Transverse colon (tissue), 4 donors: ENCODE measurements at regions of chr5 and their contacts with region 1.

Region 1: DNA sequence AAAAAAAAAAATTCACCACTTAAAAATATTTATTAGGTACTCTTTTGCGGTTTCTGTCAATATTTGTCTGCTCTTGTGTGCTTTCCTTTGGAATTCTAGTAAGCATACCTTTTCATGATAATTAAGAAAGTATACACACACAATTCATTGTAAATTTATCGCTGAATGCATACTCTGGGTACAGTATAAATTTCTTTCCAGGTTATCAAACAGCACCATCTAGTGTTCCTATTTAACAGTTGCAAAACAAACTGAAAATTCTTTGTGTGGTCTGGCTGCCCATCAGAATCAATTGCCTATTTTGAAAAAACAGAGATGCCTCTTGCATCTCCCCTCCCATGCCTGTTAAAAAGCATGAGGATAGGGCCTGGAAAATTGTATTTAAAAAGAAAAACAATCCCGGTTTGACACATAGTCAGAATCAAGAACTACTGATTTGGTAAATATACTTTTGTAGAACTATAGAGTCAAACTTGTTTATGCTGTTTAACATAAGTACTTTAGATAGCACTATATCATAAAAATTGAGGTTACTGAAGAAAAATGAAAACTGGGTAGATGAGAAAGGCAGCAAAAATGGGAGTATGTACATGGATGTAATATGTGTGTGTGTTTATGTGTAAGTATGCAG is 16.2 kb downstream of the PGGT1B start:
- DNase-seq: no peak
- H3K4me3 ChIP-seq: no peak overlapping the region
- H3K27ac ChIP-seq: no peak overlapping the region
- H3K4me1 ChIP-seq: peaks cover 0 to 26% (median 8%) of the 10 kb centered on the region in 4 donors
- H3K27me3 ChIP-seq: no peaks in the 10 kb centered on the region
- CTCF ChIP-seq: peak; percentile 68 to 75 (median 71)
- EP300 ChIP-seq: no peak
- POLR2A ChIP-seq: no peak

Region 2: DNA sequence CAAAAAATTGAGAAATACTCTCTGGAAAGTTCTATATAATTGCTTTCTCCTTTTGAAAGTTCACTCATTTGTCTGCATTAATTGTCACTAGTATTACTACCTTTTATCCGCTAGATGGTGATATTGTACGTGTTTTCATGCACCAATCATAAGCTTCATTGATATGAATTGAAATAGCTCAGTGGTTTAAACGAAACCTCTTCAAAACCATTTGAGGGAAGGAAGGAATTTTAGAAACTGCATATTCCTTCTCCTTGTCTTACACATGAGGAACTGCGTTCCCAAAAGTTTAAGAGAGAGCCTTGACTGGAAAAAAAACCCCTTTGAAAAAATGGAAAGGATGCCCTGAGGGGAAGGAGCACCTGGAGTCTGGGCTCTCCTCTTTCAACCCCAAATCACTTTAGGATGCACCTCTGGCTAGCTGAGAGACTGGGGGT is 1634.4 kb before region 1 on chr5:
- in situ Hi-C with region 1: no loop called
- intact Hi-C with region 1: loop called (anchors 10 kb)
- DNase-seq: no peak
- H3K4me3 ChIP-seq: no peak overlapping the region
- H3K27ac ChIP-seq: no peak overlapping the region
- H3K4me1 ChIP-seq: peaks cover 0 to 3% (median 0%) of the 10 kb centered on the region in 4 donors
- H3K27me3 ChIP-seq: peaks cover 13% of the 10 kb centered on the region
- CTCF ChIP-seq: peak; percentile 52 to 62 (median 58)
- EP300 ChIP-seq: no peak
- POLR2A ChIP-seq: no peak

Region 3: DNA sequence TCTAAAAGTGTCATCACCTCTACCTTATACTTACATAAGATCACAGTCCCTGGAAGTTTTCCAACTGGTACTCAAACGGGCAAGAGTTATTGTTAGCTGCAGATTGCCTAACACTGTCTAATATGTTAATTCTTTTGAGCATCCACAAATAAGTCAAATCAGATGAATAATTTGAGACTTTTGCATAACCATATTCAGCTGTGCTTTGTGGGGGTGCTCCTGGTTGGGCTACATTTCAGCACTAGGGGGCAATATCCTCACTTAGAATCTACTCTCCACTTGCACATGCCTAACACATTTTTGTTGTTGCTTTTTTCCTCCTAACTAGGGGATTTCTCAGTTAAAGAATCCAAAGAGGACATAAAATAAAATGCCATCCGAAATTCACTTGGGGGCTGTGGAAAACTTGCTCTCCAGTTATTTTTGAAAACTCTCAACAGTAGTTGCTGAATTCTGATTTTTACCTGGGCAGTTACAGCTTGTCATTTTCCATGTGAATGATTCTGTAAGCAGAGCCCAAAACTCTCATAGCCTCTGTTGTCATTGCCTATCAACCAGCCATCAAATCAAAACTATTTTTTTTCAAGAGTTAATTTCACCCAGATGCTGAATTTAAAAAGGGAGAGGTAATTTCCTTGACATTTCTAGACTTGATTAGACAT is 148.3 kb before region 1 on chr5:
- in situ Hi-C with region 1: loop called (anchors 5 to 25 kb)
- intact Hi-C with region 1: no loop called
- DNase-seq: peak; percentile 23
- H3K4me3 ChIP-seq: no peak overlapping the region
- H3K27ac ChIP-seq: no peak overlapping the region
- H3K4me1 ChIP-seq: peaks cover 0 to 7% (median 0%) of the 10 kb centered on the region in 4 donors
- H3K27me3 ChIP-seq: no peaks in the 10 kb centered on the region
- CTCF ChIP-seq: peak; percentile 58 to 69 (median 65)
- EP300 ChIP-seq: no peak
- POLR2A ChIP-seq: no peak

Region 4: DNA sequence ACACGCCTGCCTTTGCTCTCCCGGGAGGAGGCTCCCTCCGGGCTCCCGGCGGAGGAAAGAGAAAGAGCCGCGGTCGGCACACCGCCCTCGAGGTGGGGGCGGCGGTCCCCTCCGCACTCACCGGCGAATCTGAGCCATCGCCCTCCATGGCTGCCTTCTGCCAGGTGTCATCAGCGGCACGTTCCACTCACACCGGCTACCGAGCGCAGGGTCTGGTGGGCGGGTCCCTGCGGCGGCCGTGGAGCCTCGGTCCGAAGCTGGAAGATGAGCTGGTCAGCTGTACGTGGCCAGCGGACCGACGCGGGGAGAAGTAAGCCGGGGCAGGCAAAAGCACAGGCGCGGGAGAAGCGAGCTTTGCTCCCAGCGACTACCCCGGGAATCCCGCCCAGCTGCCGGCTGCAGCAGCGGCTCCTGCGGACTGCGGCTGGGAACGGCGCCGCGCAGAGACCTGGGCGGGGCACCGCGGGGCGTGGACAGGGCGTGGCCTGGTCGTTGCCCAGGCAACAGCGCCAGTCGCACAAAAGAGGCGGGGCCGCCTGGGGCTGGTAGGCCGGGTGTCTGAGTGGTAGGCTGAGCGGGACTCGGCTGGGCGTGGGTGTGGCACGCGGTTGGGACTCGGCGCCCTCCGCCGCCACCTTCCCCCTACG is 76.9 kb before region 1 on chr5 and contains the start of gene TRIM36:
- in situ Hi-C with region 1: no loop called
- intact Hi-C with region 1: loop called (anchors 10 kb)
- DNase-seq: peak; percentile 96
- H3K4me3 ChIP-seq: peak within 1 kb of the TSS; percentile 61 to 85 (median 66)
- H3K27ac ChIP-seq: peak within 1 kb of the TSS; percentile 83 to 93 (median 90)
- H3K4me1 ChIP-seq: peaks cover 0 to 32% (median 20%) of the 10 kb centered on the region in 4 donors
- H3K27me3 ChIP-seq: peaks cover 48% of the 10 kb centered on the region
- CTCF ChIP-seq: peak in 2 of 5 experiments; percentile 17 to 20
- EP300 ChIP-seq: no peak
- POLR2A ChIP-seq: peak; percentile 93
- total RNA-seq, gene TRIM36: 30.8 to 69.1 (median 38.2) TPM